Adrenal gland (tissue), 19 donors: ENCODE measurements at regions of chr2 and their contacts with region 1.

Region 1: DNA sequence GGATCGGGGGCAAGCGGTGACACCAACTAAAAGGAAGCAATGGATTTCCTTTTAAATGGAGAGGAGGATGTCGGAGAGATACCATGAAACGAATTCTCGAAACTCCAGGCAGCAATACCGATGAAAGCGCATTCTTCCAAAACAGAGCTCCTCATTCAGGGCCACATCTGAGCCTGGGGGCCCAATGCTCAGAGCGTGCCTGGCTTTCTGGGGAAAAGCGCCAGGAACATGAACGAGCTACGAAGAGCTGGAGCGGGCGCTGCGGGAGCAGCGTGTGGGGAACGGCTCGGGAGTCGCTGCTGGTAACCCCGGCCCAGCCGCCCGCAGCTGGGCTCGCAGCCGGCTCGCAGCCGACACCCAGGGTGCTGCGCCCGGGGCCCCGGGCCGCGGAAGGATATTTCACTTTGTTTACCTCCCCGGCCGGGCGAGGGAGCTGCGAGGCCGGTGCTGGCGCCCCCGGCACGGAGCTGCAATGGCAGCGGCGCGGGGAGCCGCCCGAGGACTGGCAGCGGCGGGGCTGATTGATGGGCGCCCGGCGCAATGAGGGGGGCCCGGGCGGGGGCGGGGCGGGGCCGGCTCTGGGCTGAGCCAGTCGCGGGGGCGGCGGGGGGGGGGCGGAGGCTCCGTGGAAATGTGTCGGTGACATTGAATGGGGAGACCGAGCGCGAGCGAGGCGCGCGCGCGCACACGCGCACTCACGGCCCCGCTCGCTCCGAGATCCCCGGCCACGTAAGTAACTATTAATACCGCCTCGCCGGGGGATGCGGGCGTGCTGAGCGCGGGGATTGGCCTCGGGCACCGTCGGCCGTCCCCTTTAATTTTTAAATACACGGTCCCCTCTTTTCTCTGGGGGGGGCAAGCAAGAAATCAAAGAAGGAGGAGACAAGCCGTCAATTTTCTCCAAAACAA is at the start of gene TRIB2:
- DNase-seq: peak; percentile 87 to 94 (median 91)
- H3K4me3 ChIP-seq: peak within 1 kb of the TSS; percentile 9 to 89 (median 48)
- H3K27ac ChIP-seq: peak within 1 kb of the TSS; percentile 91 to 98 (median 94)
- H3K4me1 ChIP-seq: peaks cover 32 to 37% of the 10 kb centered on the region in 2 donors
- H3K27me3 ChIP-seq: no peaks in the 10 kb centered on the region
- CTCF ChIP-seq: peak in 1 of 6 experiments; percentile 45
- POLR2A ChIP-seq: peak in 1 of 2 donors; percentile 84
- total RNA-seq, gene TRIB2: 35.5 to 263 (median 112) TPM

Region 2: DNA sequence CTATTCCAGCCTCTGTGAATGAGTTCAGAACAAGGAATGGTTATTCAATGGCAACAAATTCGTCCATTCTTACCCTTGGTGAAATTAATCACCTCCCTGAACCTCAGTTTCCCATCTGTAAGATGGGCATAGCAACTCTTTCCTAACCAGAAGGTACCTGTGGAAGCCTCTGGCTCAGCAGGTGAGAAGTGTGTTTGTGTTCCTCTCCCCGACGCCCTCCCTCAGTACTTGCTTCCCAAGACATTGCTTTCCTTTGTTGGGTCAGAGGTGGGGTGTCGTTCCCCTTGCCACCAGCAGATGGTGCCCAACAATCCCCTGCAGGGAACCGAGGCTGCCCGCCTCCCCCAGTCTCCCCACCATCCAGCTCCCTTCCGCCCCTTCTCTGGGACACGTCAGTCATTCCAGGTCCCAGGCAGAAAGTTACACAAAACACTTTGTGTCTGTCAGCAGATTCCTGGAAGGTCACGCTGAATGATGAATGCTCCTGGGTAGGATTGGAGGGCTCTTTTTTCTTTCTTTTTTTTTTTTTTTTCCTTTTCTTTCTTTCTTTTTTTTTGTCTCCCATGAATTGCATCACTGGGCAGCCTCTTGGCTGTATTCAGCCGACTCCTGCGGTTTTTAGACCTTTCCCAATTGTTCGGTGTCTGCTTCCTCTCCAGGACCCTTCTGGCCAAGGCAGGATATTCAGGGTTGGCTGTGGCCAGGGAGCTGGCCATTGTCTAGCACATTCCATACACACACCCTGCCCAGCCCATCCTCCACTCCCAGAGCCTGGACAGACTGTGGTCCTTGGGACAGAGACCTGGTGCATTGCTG is 852.8 kb before region 1 on chr2:
- intact Hi-C with region 1: loop called (anchors 10 kb)
- DNase-seq: peak; percentile 85 to 95 (median 94)
- H3K4me3 ChIP-seq: peak overlapping the region in 1 of 4 donors; percentile 19
- H3K27ac ChIP-seq: peak overlapping the region in 3 of 5 donors; percentile 30 to 58 (median 34)
- H3K4me1 ChIP-seq: peaks cover 11 to 14% of the 10 kb centered on the region in 2 donors
- H3K27me3 ChIP-seq: no peaks in the 10 kb centered on the region
- CTCF ChIP-seq: peak; percentile 95 to 99 (median 96)
- POLR2A ChIP-seq: no peak

Region 3: GRCh38 chr2:12479065-12479601 is 237.4 kb before region 1 on chr2:
- intact Hi-C with region 1: loop called in 1 of 2 experiments (anchors 10 kb)
- DNase-seq: peak in 1 of 7 donors; percentile 13
- H3K4me3 ChIP-seq: no peak overlapping the region
- H3K27ac ChIP-seq: peak overlapping the region in 2 of 5 donors; percentile 4 to 65
- H3K4me1 ChIP-seq: peaks cover 0 to 15% of the 10 kb centered on the region in 2 donors
- H3K27me3 ChIP-seq: no peaks in the 10 kb centered on the region
- CTCF ChIP-seq: no peak
- POLR2A ChIP-seq: no peak

Region 4: DNA sequence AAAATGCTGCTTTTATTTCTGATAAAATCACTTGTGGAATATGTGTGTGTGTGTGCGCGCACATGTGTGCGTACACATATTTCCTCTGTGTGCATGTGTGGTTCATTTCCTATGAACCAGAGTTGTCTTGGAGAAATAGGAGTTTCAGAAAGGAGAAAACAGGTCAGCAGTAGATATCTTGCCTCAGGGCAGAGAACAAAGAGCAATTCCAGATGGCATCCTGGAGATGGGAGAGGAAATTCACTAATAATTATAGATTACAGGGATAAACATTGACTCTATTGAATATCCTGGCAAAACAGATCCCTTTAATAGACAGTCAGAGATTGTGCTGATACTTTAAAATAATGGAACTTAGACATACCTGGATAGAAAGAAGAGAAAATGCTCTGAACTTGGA is 298.2 kb after region 1 on chr2:
- intact Hi-C with region 1: loop called (anchors 5 to 10 kb)
- DNase-seq: no peak
- H3K4me3 ChIP-seq: no peak overlapping the region
- H3K27ac ChIP-seq: no peak overlapping the region
- H3K4me1 ChIP-seq: no peaks in the 10 kb centered on the region
- H3K27me3 ChIP-seq: peaks cover 10% of the 10 kb centered on the region
- CTCF ChIP-seq: no peak
- POLR2A ChIP-seq: no peak